Heart right ventricle (tissue), 16 donors: ENCODE measurements at regions of chr10 and their contacts with region 1.

Region 1: GRCh38 chr10:91632671-91633550 is at the start of gene PPP1R3C:
- DNase-seq: peak; percentile 88 to 90
- ATAC-seq: peak; percentile 90 to 98 (median 95)
- H3K4me3 ChIP-seq: peak within 1 kb of the TSS; percentile 46 to 86 (median 72)
- H3K27ac ChIP-seq: peak within 1 kb of the TSS; percentile 50 to 88 (median 84)
- H3K4me1 ChIP-seq: peaks cover 0 to 40% (median 15%) of the 10 kb centered on the region in 9 donors
- H3K27me3 ChIP-seq: peaks cover 0 to 31% (median 0%) of the 10 kb centered on the region in 7 donors
- CTCF ChIP-seq: peak in 6 of 9 donors; percentile 32 to 55 (median 40)
- total RNA-seq, gene PPP1R3C: 121 to 315 (median 190) TPM

Region 2: GRCh38 chr10:91190876-91191583 is 441.9 kb before region 1 on chr10:
- intact Hi-C with region 1: no loop called
- DNase-seq: no peak
- ATAC-seq: peak in 2 of 8 donors; percentile 30 to 55
- H3K4me3 ChIP-seq: no peak overlapping the region
- H3K27ac ChIP-seq: peak overlapping the region in 3 of 10 donors; percentile 15 to 45 (median 33)
- H3K4me1 ChIP-seq: peaks cover 0 to 63% (median 34%) of the 10 kb centered on the region in 9 donors
- H3K27me3 ChIP-seq: no peaks in the 10 kb centered on the region
- CTCF ChIP-seq: no peak

Region 3: DNA sequence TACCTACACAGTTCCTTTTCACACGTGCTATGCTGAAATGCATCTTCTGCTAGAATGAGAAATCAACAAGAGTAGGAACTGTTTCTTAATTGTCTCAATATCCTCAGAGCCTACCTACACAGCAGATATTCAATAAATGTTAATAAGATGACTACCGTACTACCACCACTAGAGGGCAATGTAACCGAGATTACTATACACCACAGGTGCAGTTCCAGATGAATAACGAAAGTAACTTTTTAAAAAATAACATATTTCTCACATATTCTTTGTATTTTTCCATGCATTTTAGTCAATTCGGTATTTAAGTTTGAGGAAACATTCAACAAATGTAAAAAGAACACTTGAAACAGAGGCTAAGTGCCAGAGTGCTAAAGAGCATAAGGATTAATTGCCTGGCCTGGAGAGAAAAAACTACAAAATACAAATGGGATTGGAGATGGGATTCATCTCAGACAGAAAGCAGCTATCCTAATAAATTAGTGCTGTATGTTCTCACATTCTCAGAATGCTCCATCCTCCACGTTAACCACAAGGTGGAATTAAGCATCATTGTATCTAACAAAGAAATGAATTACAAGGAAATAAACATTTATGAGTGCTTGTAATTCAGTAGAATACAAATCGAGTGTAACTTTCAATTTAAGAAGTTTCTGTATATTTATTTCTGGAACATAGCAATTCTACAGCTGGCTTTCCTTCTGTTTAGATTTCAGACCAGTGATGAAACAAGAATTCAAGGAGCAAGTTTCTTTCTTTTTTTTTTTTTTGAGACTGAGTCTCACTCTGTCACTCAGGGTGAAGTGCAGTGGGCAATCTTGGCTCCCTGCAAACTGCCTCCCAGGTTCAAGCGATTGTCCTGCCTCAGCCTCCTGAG is 243.0 kb before region 1 on chr10:
- intact Hi-C with region 1: loop called in 7 of 10 experiments (anchors 5 to 10 kb)
- DNase-seq: peak in 1 of 2 donors; percentile 9
- ATAC-seq: peak in 7 of 8 donors; percentile 58 to 80 (median 71)
- H3K4me3 ChIP-seq: no peak overlapping the region
- H3K27ac ChIP-seq: no peak overlapping the region
- H3K4me1 ChIP-seq: peaks cover 0 to 4% (median 0%) of the 10 kb centered on the region in 9 donors
- H3K27me3 ChIP-seq: peaks cover 0 to 24% (median 0%) of the 10 kb centered on the region in 7 donors
- CTCF ChIP-seq: peak; percentile 37 to 82 (median 72)

Region 4: DNA sequence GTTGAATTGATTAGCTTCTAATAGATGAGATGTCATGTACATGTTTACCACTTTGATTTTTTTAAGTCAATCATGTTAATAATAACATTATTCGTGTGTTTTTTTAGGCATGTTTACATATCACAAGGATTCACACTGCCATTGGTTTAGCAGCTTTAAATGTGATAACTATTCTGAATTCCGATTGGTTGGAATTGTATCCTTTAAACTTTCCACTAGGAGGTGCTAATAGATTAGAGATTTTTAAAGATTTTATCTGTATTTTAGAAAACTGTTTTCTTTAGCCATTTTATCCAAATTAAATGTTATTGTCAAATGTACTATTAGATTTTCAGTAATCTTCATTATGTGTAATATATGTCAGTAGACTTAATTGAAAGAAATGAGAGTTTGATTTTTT is 139.6 kb before region 1 on chr10:
- intact Hi-C with region 1: loop called (anchors 1 to 5 kb)
- DNase-seq: no peak
- ATAC-seq: no peak
- H3K4me3 ChIP-seq: no peak overlapping the region
- H3K27ac ChIP-seq: no peak overlapping the region
- H3K4me1 ChIP-seq: no peaks in the 10 kb centered on the region
- H3K27me3 ChIP-seq: no peaks in the 10 kb centered on the region
- CTCF ChIP-seq: peak in 8 of 9 donors; percentile 35 to 72 (median 55)

Region 5: GRCh38 chr10:91590142-91590903 is 42.6 kb before region 1 on chr10:
- intact Hi-C with region 1: loop called in 5 of 10 experiments (anchors 5 kb)
- DNase-seq: peak; percentile 57 to 58
- ATAC-seq: peak; percentile 17 to 46 (median 34)
- H3K4me3 ChIP-seq: no peak overlapping the region
- H3K27ac ChIP-seq: peak overlapping the region; percentile 78 to 95 (median 90)
- H3K4me1 ChIP-seq: peaks cover 22 to 83% (median 71%) of the 10 kb centered on the region in 9 donors
- H3K27me3 ChIP-seq: no peaks in the 10 kb centered on the region
- CTCF ChIP-seq: no peak

Region 6: DNA sequence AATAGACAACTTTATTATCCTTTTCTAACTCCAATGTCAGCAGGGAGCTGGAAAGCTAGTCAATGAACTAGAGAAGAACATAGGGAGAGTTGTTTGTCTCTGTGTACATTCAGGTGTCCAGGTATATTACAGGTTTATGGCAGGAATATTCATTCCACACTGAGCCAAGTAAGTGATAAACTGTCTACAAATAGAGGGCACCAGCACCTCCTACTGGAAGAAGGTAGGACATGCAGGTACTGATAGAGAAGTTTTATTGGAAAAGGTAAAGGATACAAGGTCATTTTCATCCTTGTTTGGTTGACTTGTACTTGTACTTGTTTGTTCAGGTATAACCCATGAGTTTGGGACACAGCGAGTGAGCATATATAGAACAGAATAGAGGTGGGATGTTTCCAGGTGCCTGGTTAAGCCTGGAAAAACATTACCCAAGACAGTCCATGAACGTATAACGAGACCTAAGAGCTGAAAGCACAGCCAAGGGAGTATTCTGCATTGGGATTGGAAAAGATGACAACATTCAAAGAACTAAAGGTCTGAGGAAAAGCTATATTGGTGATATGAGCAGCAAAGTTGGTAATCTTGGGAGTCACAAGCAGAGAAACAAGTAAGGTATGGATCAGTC is 61.4 kb after region 1 on chr10:
- intact Hi-C with region 1: loop called in 1 of 10 experiments (anchors 5 kb)
- DNase-seq: no peak
- ATAC-seq: peak in 1 of 8 donors; percentile 50
- H3K4me3 ChIP-seq: no peak overlapping the region
- H3K27ac ChIP-seq: no peak overlapping the region
- H3K4me1 ChIP-seq: peaks cover 0 to 11% (median 0%) of the 10 kb centered on the region in 9 donors
- H3K27me3 ChIP-seq: no peaks in the 10 kb centered on the region
- CTCF ChIP-seq: peak; percentile 27 to 72 (median 63)